CD4-positive, alpha-beta T cell (primary cell): ENCODE measurements at regions of chr1 and their contacts with region 1.

Region 1: DNA sequence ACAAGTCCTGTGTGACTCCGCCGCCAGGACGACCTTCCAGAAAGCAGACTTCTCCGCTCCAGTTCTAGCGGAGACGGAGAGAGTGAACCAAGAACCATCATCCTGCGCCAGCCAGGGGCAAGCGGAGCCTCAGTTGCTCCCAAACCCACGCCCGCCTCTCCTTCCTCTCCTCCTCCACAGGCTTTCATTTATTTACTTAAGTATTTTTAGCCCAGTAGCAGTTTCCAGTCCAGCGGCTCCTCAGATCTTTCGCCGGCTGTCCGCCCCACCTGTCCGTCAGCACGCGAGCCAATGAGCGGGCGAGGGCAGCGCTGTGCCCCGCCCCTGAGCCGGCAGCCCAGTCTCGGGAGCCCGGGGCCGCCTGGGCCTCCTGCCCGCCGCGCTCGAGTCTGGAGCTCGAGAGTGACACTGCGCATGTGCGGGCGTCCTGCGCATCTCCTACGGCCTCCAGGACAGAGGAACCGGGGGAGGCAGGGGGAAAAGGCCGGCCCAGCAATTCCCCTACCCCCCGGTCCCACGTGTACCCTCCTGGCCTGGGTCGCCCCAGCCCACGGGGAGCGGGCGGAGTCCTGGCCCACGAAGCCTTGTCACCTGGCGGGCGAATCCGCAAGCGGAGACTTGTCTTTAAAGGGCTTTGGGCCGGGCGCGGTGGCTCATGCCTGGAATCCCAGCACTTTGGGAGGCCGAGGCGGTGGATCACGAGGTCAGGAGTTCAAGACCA is at the start of gene FALEC:
- DNase-seq: peak; percentile 75 to 95 (median 87)
- ATAC-seq: peak; percentile 95
- H3K4me3 ChIP-seq: peak within 1 kb of the TSS; percentile 82
- H3K4me3 Mint-ChIP-seq: peak within 1 kb of the TSS; percentile 87
- H3K27ac ChIP-seq: peak within 1 kb of the TSS in 1 of 2 donors; percentile 7
- H3K27ac Mint-ChIP-seq: peak within 1 kb of the TSS; percentile 39
- H3K4me1 ChIP-seq: peaks cover 17% of the 10 kb centered on the region
- H3K4me1 Mint-ChIP-seq: peaks cover 20% of the 10 kb centered on the region
- H3K27me3 ChIP-seq: no peaks in the 10 kb centered on the region
- H3K27me3 Mint-ChIP-seq: no peaks in the 10 kb centered on the region
- CTCF ChIP-seq: no peak
- total RNA-seq, gene FALEC: not detected

Region 2: DNA sequence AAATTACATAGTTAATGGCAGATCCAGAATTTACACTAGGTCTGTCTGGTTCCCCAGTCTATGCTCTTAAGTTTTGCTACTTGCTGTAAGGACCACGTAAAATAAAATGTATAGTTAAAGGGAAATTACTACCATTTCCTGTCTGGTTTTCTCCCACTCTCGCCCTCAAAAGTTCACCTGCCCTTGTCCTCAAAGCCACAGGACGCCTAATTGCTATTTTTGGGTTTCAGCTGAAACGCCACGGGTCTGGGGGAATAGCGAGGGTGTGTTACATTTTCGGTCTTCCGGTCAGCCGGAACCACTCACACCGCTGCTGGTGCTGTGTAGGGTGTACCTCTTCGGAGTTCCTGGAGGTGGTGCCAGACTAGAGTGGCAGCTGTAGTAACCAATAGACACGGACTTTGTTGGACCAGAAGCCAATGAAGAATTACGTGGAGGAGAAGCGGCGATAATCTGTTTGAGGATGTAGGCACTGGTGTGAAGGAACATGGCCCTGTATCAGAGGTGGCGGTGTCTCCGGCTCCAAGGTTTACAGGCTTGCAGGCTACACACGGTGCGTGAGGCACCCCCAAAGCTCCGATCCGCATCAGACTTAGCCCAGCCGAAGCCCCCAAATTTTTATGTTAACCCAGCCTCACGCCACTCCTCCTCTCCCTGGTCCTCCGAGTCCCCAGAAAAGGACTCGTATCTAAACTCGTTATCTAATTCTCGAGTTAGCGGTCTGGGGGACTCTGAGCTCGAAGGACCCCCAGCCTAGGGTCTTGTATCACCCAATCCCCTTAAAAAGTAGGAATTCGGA is 28.3 kb before region 1 on chr1 and contains the start of gene TARS2:
- CTCF ChIA-PET with region 1: no interaction called
- POLR2A ChIA-PET with region 1: interaction called, 17 read pairs
- intact Hi-C with region 1: loop called in 1 of 2 experiments (anchors 2 kb)
- DNase-seq: peak; percentile 85 to 99 (median 93)
- ATAC-seq: peak; percentile 100
- H3K4me3 ChIP-seq: peak within 1 kb of the TSS; percentile 67
- H3K4me3 Mint-ChIP-seq: peak within 1 kb of the TSS; percentile 98
- H3K27ac ChIP-seq: peak within 1 kb of the TSS; percentile 53 to 59
- H3K27ac Mint-ChIP-seq: peak within 1 kb of the TSS; percentile 84
- H3K4me1 ChIP-seq: peaks cover 16% of the 10 kb centered on the region
- H3K4me1 Mint-ChIP-seq: peaks cover 20% of the 10 kb centered on the region
- H3K27me3 ChIP-seq: no peaks in the 10 kb centered on the region
- H3K27me3 Mint-ChIP-seq: no peaks in the 10 kb centered on the region
- CTCF ChIP-seq: no peak
- total RNA-seq, gene TARS2: 22.8 to 25.3 TPM

Region 3: GRCh38 chr1:150532868-150533302 is 17.4 kb after region 1 on chr1:
- CTCF ChIA-PET with region 1: interaction called, 11 read pairs
- POLR2A ChIA-PET with region 1: interaction called, 3 read pairs
- intact Hi-C with region 1: no loop called
- DNase-seq: no peak
- ATAC-seq: no peak
- H3K4me3 ChIP-seq: no peak overlapping the region
- H3K4me3 Mint-ChIP-seq: no peak overlapping the region
- H3K27ac ChIP-seq: no peak overlapping the region
- H3K27ac Mint-ChIP-seq: no peak overlapping the region
- H3K4me1 ChIP-seq: no peaks in the 10 kb centered on the region
- H3K4me1 Mint-ChIP-seq: no peaks in the 10 kb centered on the region
- H3K27me3 ChIP-seq: no peaks in the 10 kb centered on the region
- H3K27me3 Mint-ChIP-seq: no peaks in the 10 kb centered on the region
- CTCF ChIP-seq: no peak